CD4-positive, alpha-beta T cell (primary cell): ENCODE measurements at regions of chr7 and their contacts with region 1.

Region 1: GRCh38 chr7:93117852-93118530 is at the start of gene SAMD9:
- DNase-seq: peak in 13 of 14 experiments; percentile 9 to 93 (median 44)
- ATAC-seq: peak; percentile 99
- H3K4me3 ChIP-seq: peak within 1 kb of the TSS; percentile 64
- H3K4me3 Mint-ChIP-seq: peak within 1 kb of the TSS; percentile 86
- H3K27ac ChIP-seq: peak within 1 kb of the TSS; percentile 55 to 82
- H3K27ac Mint-ChIP-seq: peak within 1 kb of the TSS; percentile 78
- H3K4me1 ChIP-seq: peaks cover 21% of the 10 kb centered on the region
- H3K4me1 Mint-ChIP-seq: peaks cover 53% of the 10 kb centered on the region
- H3K27me3 ChIP-seq: no peaks in the 10 kb centered on the region
- H3K27me3 Mint-ChIP-seq: no peaks in the 10 kb centered on the region
- CTCF ChIP-seq: no peak
- total RNA-seq, gene SAMD9: 19.1 to 21.5 TPM

Region 2: GRCh38 chr7:91940572-91941341 is 1177.2 kb before region 1 on chr7 and contains the start of gene AKAP9:
- CTCF ChIA-PET with region 1: no interaction called
- POLR2A ChIA-PET with region 1: interaction called, 4 read pairs
- intact Hi-C with region 1: loop called in 1 of 2 experiments (anchors 10 kb)
- DNase-seq: peak; percentile 77 to 94 (median 84)
- ATAC-seq: peak; percentile 88
- H3K4me3 ChIP-seq: peak within 1 kb of the TSS; percentile 96
- H3K4me3 Mint-ChIP-seq: peak within 1 kb of the TSS; percentile 90
- H3K27ac ChIP-seq: peak within 1 kb of the TSS; percentile 82 to 93
- H3K27ac Mint-ChIP-seq: peak within 1 kb of the TSS; percentile 92
- H3K4me1 ChIP-seq: peaks cover 25% of the 10 kb centered on the region
- H3K4me1 Mint-ChIP-seq: peaks cover 49% of the 10 kb centered on the region
- H3K27me3 ChIP-seq: no peaks in the 10 kb centered on the region
- H3K27me3 Mint-ChIP-seq: no peaks in the 10 kb centered on the region
- CTCF ChIP-seq: no peak
- total RNA-seq, gene AKAP9: 62.5 to 64.8 TPM

Region 3: GRCh38 chr7:92590711-92591310 is 527.2 kb before region 1 on chr7:
- CTCF ChIA-PET with region 1: interaction called, 5 read pairs
- POLR2A ChIA-PET with region 1: interaction called, 5 read pairs
- intact Hi-C with region 1: loop called in 1 of 2 experiments (anchors 5 kb)
- DNase-seq: peak in 3 of 14 experiments; percentile 6 to 24 (median 7)
- ATAC-seq: no peak
- H3K4me3 ChIP-seq: peak overlapping the region; percentile 85
- H3K4me3 Mint-ChIP-seq: peak overlapping the region; percentile 91
- H3K27ac ChIP-seq: no peak overlapping the region
- H3K27ac Mint-ChIP-seq: peak overlapping the region; percentile 95
- H3K4me1 ChIP-seq: peaks cover 30% of the 10 kb centered on the region
- H3K4me1 Mint-ChIP-seq: peaks cover 52% of the 10 kb centered on the region
- H3K27me3 ChIP-seq: no peaks in the 10 kb centered on the region
- H3K27me3 Mint-ChIP-seq: no peaks in the 10 kb centered on the region
- CTCF ChIP-seq: no peak

Region 4: DNA sequence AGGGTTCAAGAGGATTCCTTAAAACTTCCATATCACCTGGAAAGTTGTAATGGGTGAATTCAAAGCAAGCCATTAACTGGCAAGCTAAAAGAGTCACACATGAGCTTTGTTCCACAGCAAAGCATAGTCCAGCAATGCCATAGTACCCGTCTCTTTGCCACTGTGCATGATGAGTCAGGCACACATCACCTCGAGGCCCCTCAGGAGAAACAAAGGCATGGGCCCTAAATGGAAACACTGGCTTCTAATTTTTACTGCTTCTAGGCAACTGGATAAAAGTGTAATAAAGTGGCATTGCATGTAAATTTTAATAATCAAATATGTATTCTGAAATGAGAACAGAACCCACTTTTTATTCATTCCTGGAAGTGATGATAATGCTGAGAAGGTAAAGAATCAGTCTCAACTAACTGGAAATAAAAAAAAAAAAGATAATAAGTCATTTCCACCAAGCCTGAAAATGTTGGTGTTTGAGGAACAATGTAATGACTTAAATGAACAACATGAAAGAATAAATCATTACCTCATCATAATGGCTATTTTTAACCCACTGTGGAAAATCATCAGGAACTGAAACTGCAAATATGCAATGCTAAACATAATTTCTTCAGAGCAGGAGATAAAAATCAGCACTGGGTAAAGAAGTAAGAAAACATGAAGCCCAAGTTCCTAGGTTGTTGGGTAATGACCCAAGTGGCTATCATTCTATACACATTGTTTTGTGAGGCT is 386.5 kb before region 1 on chr7:
- CTCF ChIA-PET with region 1: no interaction called
- POLR2A ChIA-PET with region 1: no interaction called
- intact Hi-C with region 1: no loop called
- DNase-seq: peak in 3 of 14 experiments; percentile 24 to 41 (median 32)
- ATAC-seq: no peak
- H3K4me3 ChIP-seq: no peak overlapping the region
- H3K4me3 Mint-ChIP-seq: no peak overlapping the region
- H3K27ac ChIP-seq: no peak overlapping the region
- H3K27ac Mint-ChIP-seq: no peak overlapping the region
- H3K4me1 ChIP-seq: peaks cover 3% of the 10 kb centered on the region
- H3K4me1 Mint-ChIP-seq: peaks cover 11% of the 10 kb centered on the region
- H3K27me3 ChIP-seq: no peaks in the 10 kb centered on the region
- H3K27me3 Mint-ChIP-seq: no peaks in the 10 kb centered on the region
- CTCF ChIP-seq: no peak

Region 5: DNA sequence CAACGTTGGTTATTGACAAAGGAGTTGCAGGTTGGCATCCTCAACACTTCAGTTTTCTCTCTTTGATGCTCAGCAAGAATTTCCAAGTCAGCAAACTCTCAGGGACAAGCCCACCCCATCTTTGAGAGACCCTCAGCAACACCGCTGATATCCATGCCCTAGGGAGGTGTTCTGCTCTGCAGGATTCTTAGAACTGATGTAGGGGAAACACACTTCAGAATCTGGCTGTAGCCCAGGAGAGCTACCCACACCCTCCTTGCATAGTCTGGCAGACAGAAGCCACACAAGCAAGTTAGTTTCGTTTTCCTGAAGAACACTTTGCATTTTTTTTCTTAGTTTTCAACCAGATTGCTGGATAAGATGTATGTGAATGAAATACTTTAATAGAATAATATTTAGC is 29.4 kb after region 1 on chr7:
- CTCF ChIA-PET with region 1: no interaction called
- POLR2A ChIA-PET with region 1: interaction called, 25 read pairs
- intact Hi-C with region 1: loop called (anchors 2 kb)
- DNase-seq: peak; percentile 0 to 73 (median 26)
- ATAC-seq: peak; percentile 93
- H3K4me3 ChIP-seq: peak overlapping the region; percentile 68
- H3K4me3 Mint-ChIP-seq: peak overlapping the region; percentile 86
- H3K27ac ChIP-seq: peak overlapping the region in 1 of 2 donors; percentile 56
- H3K27ac Mint-ChIP-seq: peak overlapping the region; percentile 90
- H3K4me1 ChIP-seq: peaks cover 15% of the 10 kb centered on the region
- H3K4me1 Mint-ChIP-seq: peaks cover 43% of the 10 kb centered on the region
- H3K27me3 ChIP-seq: no peaks in the 10 kb centered on the region
- H3K27me3 Mint-ChIP-seq: no peaks in the 10 kb centered on the region
- CTCF ChIP-seq: no peak

Region 6: GRCh38 chr7:93704217-93704616 is 586.2 kb after region 1 on chr7:
- CTCF ChIA-PET with region 1: no interaction called
- POLR2A ChIA-PET with region 1: no interaction called
- intact Hi-C with region 1: no loop called
- DNase-seq: no peak
- ATAC-seq: no peak
- H3K4me3 ChIP-seq: no peak overlapping the region
- H3K4me3 Mint-ChIP-seq: no peak overlapping the region
- H3K27ac ChIP-seq: no peak overlapping the region
- H3K27ac Mint-ChIP-seq: no peak overlapping the region
- H3K4me1 ChIP-seq: no peaks in the 10 kb centered on the region
- H3K4me1 Mint-ChIP-seq: no peaks in the 10 kb centered on the region
- H3K27me3 ChIP-seq: no peaks in the 10 kb centered on the region
- H3K27me3 Mint-ChIP-seq: no peaks in the 10 kb centered on the region
- CTCF ChIP-seq: no peak

Region 7: GRCh38 chr7:94509879-94510581 is 1392.0 kb after region 1 on chr7:
- CTCF ChIA-PET with region 1: no interaction called
- POLR2A ChIA-PET with region 1: no interaction called
- intact Hi-C with region 1: loop called in 1 of 2 experiments (anchors 10 kb)
- DNase-seq: peak; percentile 43 to 87 (median 60)
- ATAC-seq: peak; percentile 81
- H3K4me3 ChIP-seq: peak overlapping the region; percentile 70
- H3K4me3 Mint-ChIP-seq: peak overlapping the region; percentile 92
- H3K27ac ChIP-seq: peak overlapping the region; percentile 70 to 73
- H3K27ac Mint-ChIP-seq: no peak overlapping the region
- H3K4me1 ChIP-seq: peaks cover 29% of the 10 kb centered on the region
- H3K4me1 Mint-ChIP-seq: peaks cover 49% of the 10 kb centered on the region
- H3K27me3 ChIP-seq: no peaks in the 10 kb centered on the region
- H3K27me3 Mint-ChIP-seq: no peaks in the 10 kb centered on the region
- CTCF ChIP-seq: peak; percentile 13